Calu3 (cell line): ENCODE measurements at regions of chr10 and their contacts with region 1.

Region 1: DNA sequence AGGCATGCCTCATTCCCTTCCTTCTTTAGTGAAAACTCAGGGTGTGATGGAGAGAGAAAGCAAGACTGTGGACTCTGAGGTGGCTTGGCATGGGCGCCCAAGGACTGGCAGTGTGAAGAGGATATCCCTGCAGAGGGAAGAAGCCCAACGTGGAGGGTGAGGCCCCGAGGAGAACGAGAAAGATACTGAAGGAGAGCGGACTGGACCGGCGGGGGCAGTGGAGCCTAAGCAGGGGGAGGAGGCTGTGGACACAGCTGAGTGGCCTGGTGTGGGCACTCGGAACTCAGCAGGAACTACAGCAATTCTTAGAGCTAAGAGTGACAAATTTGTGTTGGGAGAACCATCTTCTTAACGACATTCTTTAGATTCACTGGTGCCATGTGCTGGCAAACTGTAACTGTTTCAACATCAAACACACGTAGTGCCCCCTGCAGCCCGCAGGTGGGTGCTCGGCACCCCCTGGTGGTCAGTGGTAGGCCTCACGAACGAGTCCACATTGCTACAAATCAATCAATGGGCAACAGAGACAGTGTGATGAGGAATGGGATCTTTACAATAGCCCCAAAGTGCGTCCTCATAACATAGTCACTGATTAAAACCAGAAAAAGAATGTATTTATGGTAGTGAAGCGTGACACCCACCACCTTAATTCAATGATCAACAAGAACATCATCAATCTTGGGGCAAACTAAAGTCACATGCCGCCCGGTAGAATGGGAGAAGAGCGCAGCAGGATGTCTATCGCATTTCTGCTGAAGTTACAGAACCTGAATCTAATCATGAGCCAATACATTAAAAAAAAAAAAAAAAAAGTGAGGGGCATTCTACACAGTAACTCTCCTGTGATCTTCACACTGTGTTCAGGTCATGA is 2.0 kb upstream of the SFTPA1 start:
- DNase-seq: peak; percentile 77
- H3K4me3 Mint-ChIP-seq: no peak overlapping the region
- H3K27ac Mint-ChIP-seq: no peak overlapping the region
- H3K4me1 Mint-ChIP-seq: no peaks in the 10 kb centered on the region
- H3K27me3 Mint-ChIP-seq: peaks cover 91% of the 10 kb centered on the region
- CTCF ChIP-seq: peak; percentile 86

Region 2: DNA sequence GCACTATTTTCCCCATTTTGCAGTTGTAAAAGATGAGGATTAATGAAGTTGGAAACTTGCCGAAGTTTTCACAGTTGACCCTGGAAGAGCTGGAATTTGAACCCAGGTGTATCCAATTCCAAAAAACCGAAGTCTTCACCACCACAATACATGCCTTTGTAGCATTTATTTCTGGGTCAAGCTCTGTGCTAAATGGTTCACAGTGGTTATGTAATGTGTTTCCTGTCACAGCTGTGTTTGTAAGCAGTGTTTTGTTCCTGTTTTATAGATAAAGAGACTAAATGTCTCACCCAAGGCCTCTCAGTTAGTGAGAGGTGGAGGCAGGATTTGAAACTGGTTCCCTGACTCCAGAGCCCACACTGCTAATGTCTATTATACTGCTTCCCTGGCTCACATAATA is 66.1 kb before region 1 on chr10:
- CTCF ChIA-PET with region 1: no interaction called
- intact Hi-C with region 1: loop called (anchors 1 kb)
- DNase-seq: no peak
- H3K4me3 Mint-ChIP-seq: no peak overlapping the region
- H3K27ac Mint-ChIP-seq: no peak overlapping the region
- H3K4me1 Mint-ChIP-seq: no peaks in the 10 kb centered on the region
- H3K27me3 Mint-ChIP-seq: peaks cover 56% of the 10 kb centered on the region
- CTCF ChIP-seq: no peak

Region 3: GRCh38 chr10:79562135-79562756 is 46.5 kb before region 1 on chr10:
- CTCF ChIA-PET with region 1: no interaction called
- intact Hi-C with region 1: loop called (anchors 2 kb)
- DNase-seq: peak; percentile 87
- H3K4me3 Mint-ChIP-seq: peak overlapping the region; percentile 35
- H3K27ac Mint-ChIP-seq: no peak overlapping the region
- H3K4me1 Mint-ChIP-seq: peaks cover 32% of the 10 kb centered on the region
- H3K27me3 Mint-ChIP-seq: peaks cover 20% of the 10 kb centered on the region
- CTCF ChIP-seq: peak; percentile 88